B cell (primary cell): ENCODE measurements at regions of chr14 and their contacts with region 1.

Region 1: GRCh38 chr14:95361373-95362137 is 41.8 kb upstream of the CLMN start:
- DNase-seq: peak; percentile 73
- ATAC-seq: peak; percentile 73
- H3K4me3 ChIP-seq: no peak overlapping the region
- H3K4me3 Mint-ChIP-seq: peak overlapping the region; percentile 49
- H3K27ac ChIP-seq: no peak overlapping the region
- H3K27ac Mint-ChIP-seq: no peak overlapping the region
- H3K4me1 ChIP-seq: peaks cover 13 to 14% of the 10 kb centered on the region in 2 donors
- H3K4me1 Mint-ChIP-seq: peaks cover 9% of the 10 kb centered on the region
- H3K27me3 ChIP-seq: peaks cover 0 to 38% (median 8%) of the 10 kb centered on the region in 4 experiments
- H3K27me3 Mint-ChIP-seq: peaks cover 52% of the 10 kb centered on the region
- CTCF ChIP-seq: peak; percentile 86

Region 2: DNA sequence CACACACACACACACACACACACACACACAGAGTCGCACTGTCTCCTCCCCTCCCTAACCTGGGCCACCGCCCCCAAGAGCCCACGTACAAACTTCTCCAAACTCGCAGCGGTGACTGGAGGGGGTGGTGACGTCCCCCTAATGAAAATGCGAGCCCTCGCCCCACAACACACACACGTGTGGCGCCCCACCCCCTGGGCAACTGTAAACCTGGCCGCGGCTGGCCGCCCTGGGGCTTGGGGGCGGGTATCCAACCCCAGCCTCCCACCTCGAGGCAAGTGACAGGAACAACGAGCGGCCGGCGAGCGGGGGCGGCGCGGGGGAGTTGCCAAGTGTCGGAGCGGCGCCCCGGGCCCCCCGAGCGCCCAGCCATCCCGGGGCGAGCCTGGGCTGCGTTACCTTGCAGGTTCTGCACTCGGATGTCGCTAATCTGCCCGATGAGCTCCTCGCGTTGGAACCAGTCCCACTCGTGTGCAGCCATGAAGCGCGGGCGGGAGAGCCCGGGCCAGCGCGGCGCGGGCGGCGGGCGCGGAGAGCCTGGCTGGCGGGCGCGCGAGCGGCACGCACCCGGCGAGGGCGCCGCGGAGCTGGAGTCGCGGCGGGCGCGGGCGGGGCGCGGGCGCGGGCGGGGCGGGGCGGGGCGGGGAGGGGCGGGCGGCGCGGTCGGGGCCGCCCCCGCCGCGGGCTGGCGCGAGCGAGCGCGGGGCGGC is 42.1 kb before region 1 on chr14 and contains the start of gene CLMN:
- CTCF ChIA-PET with region 1: interaction called, 4 read pairs
- POLR2A ChIA-PET with region 1: no interaction called
- intact Hi-C with region 1: loop called (anchors 10 kb)
- DNase-seq: peak; percentile 86
- ATAC-seq: peak; percentile 83
- H3K4me3 ChIP-seq: peak within 1 kb of the TSS; percentile 9 to 74 (median 71)
- H3K4me3 Mint-ChIP-seq: peak within 1 kb of the TSS; percentile 91
- H3K27ac ChIP-seq: peak within 1 kb of the TSS; percentile 47 to 66
- H3K27ac Mint-ChIP-seq: peak within 1 kb of the TSS; percentile 93
- H3K4me1 ChIP-seq: peaks cover 13 to 25% of the 10 kb centered on the region in 2 donors
- H3K4me1 Mint-ChIP-seq: peaks cover 30% of the 10 kb centered on the region
- H3K27me3 ChIP-seq: no peaks in the 10 kb centered on the region
- H3K27me3 Mint-ChIP-seq: no peaks in the 10 kb centered on the region
- CTCF ChIP-seq: no peak
- total RNA-seq, gene CLMN: 51.1 and 51.5 TPM in 2 replicates

Region 3: DNA sequence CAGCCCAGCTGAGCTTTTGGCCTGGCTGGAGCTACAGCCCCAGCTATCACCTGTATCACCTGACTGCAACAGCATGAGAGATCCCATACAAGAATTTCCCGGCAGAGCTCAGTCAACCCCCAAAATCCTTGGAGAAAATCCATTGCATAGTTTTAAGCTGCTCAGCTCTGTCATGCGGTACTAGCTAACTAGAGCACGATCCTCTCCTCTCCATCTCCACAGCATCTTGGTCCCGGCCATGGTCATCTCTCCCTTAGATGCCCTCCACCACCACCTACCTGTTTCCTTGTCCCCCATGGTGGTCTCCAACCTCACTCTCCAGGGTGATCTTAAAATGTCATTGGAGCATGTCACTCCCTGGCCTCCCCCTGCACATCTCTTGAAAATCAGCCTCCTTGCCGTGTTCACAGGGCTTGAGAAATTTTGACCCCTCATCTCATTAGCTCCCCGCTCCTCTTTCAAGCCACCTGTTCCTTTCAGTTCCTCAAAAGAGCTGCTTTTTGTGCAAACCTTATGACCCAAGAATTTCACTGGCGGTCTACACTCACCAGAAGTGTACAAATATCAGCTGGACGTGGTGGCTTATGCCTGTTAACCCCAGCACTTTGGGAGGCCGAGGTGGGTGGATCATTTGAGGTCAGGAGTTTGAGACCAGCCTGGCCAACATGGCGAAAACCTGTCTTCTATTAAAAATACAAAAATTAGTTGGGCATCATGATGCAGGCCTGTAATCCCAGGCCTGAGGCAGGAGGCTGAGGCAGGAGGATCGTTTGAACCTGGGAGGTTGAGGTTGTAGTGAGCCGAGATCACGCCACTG is 33.8 kb before region 1 on chr14:
- CTCF ChIA-PET with region 1: interaction called, 17 read pairs
- POLR2A ChIA-PET with region 1: no interaction called
- intact Hi-C with region 1: no loop called
- DNase-seq: peak; percentile 88
- ATAC-seq: peak; percentile 86
- H3K4me3 ChIP-seq: peak overlapping the region in 4 of 5 experiments; percentile 20 to 42 (median 28)
- H3K4me3 Mint-ChIP-seq: peak overlapping the region; percentile 84
- H3K27ac ChIP-seq: peak overlapping the region; percentile 71 to 96
- H3K27ac Mint-ChIP-seq: peak overlapping the region; percentile 92
- H3K4me1 ChIP-seq: peaks cover 42 to 46% of the 10 kb centered on the region in 2 donors
- H3K4me1 Mint-ChIP-seq: peaks cover 54% of the 10 kb centered on the region
- H3K27me3 ChIP-seq: no peaks in the 10 kb centered on the region
- H3K27me3 Mint-ChIP-seq: no peaks in the 10 kb centered on the region
- CTCF ChIP-seq: no peak

Region 4: DNA sequence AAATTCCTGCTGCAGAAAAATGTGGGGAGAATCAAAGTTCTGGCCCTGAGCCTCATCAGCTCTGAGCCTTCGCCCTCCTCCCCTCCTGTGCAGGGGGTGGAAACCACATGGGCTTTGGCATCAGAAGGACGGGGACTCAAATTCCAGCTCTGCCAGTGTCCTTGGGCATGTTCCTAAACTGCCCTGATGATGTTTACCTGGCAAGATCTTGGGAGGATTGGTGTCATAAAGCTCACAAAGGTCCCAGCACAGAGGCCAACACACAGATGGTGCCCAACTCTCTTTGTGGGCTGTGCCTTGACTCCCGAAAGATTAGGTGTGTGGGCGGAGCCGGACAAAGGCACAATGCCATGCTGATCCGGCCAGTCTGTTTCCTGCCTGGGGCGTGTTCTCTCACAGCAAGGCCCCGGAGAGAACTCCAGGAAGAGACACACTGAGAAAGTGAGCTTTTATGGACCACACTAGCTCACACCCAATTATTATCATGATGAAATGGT is 21.3 kb before region 1 on chr14:
- CTCF ChIA-PET with region 1: interaction called, 12 read pairs
- POLR2A ChIA-PET with region 1: no interaction called
- intact Hi-C with region 1: no loop called
- DNase-seq: no peak
- ATAC-seq: no peak
- H3K4me3 ChIP-seq: no peak overlapping the region
- H3K4me3 Mint-ChIP-seq: no peak overlapping the region
- H3K27ac ChIP-seq: no peak overlapping the region
- H3K27ac Mint-ChIP-seq: no peak overlapping the region
- H3K4me1 ChIP-seq: no peaks in the 10 kb centered on the region
- H3K4me1 Mint-ChIP-seq: no peaks in the 10 kb centered on the region
- H3K27me3 ChIP-seq: peaks cover 0 to 14% (median 2%) of the 10 kb centered on the region in 4 experiments
- H3K27me3 Mint-ChIP-seq: peaks cover 33% of the 10 kb centered on the region
- CTCF ChIP-seq: no peak